A673 (cell line): ENCODE measurements at regions of chr14 and their contacts with region 1.

Region 1: DNA sequence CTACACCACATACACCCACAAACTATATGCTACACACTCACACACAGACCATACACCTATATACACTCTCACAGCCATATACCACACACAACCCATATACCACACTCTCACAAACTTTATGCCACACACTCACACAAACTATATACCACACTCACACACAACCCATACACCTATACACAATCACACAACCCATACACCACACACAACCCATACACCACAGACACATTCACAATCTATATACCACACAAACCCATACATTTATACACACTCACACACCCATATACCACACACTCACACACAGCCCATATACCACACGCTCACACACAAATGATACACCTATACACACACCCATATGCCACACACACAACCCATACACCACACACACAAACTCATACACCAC is 163.3 kb downstream of the TMEM121 start:
- DNase-seq: no peak
- H3K4me3 ChIP-seq: no peak overlapping the region
- H3K27ac ChIP-seq: no peak overlapping the region
- H3K4me1 ChIP-seq: no peaks in the 10 kb centered on the region
- H3K27me3 ChIP-seq: no peaks in the 10 kb centered on the region
- CTCF ChIP-seq: no peak

Region 2: DNA sequence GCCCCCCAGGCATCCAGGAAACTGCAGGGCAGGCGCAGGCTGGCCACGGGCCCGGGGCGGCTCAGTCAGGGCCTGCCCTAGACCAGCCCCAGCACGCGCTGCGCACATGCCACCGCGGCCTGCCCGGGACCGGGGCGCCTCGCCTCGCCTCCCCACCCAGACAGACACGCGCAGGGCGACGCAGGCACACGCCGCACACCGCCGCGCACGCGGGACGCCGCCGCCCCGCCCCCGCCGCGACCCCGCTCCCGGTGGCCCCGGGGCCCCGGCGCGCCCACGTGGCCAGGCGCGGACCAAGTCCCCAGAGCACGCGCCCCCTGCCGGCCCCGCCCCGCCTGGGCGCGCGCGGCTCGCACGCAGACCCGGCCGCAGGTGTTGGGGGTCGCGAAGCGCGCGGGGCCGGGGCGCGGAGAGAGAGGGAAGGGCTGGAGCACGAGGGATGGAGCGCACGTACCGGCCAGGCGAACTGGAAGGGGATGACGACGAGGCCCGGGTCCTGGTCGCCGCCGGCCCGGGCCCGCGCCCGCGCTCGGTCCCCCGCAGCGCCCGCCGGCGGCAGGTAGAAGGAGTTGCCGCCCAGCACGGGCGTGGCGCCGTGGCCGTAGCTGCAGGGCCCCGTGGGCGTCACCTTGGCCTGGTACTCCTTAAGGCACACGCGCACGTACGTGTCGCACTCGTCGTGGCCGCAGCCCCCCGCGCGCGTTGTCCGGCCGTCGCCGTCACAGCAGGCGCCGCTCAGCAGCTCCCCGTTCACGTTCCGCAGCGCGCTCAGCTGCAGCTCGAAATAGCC is 522.2 kb before region 1 on chr14:
- CTCF ChIA-PET with region 1: no interaction called
- POLR2A ChIA-PET with region 1: no interaction called
- intact Hi-C with region 1: no loop called
- DNase-seq: no peak
- H3K4me3 ChIP-seq: peak overlapping the region; percentile 55
- H3K27ac ChIP-seq: no peak overlapping the region
- H3K4me1 ChIP-seq: peaks cover 64% of the 10 kb centered on the region
- H3K27me3 ChIP-seq: no peaks in the 10 kb centered on the region
- CTCF ChIP-seq: peak; percentile 24; the same call in 1 of the 2 replicates

Region 3: GRCh38 chr14:105568859-105569708 is 120.6 kb before region 1 on chr14:
- CTCF ChIA-PET with region 1: no interaction called
- POLR2A ChIA-PET with region 1: no interaction called
- intact Hi-C with region 1: loop called (anchors 5 kb)
- DNase-seq: no peak
- H3K4me3 ChIP-seq: no peak overlapping the region
- H3K27ac ChIP-seq: no peak overlapping the region
- H3K4me1 ChIP-seq: no peaks in the 10 kb centered on the region
- H3K27me3 ChIP-seq: no peaks in the 10 kb centered on the region
- CTCF ChIP-seq: no peak

Region 4: GRCh38 chr14:105711686-105712477 is 22.2 kb after region 1 on chr14:
- CTCF ChIA-PET with region 1: no interaction called
- POLR2A ChIA-PET with region 1: no interaction called
- intact Hi-C with region 1: no loop called
- DNase-seq: no peak
- H3K4me3 ChIP-seq: no peak overlapping the region
- H3K27ac ChIP-seq: no peak overlapping the region
- H3K4me1 ChIP-seq: no peaks in the 10 kb centered on the region
- H3K27me3 ChIP-seq: no peaks in the 10 kb centered on the region
- CTCF ChIP-seq: no peak